Dorsolateral prefrontal cortex (tissue), 120 donors: ENCODE measurements at regions of chr4 and their contacts with region 1.

Region 1: GRCh38 chr4:67106861-67107460 is 438.3 kb downstream of the CENPC start:
- DNase-seq: no peak
- H3K4me3 ChIP-seq: no peak overlapping the region
- H3K27ac ChIP-seq: no peak overlapping the region
- H3K27me3 ChIP-seq: no peaks in the 10 kb centered on the region
- CTCF ChIP-seq: no peak

Region 2: GRCh38 chr4:67332627-67333026 is 225.7 kb after region 1 on chr4:
- intact Hi-C with region 1: loop called in 1 of 2 experiments (anchors 10 kb)
- DNase-seq: no peak
- H3K4me3 ChIP-seq: no peak overlapping the region
- H3K27ac ChIP-seq: no peak overlapping the region
- H3K27me3 ChIP-seq: peaks cover 0 to 10% (median 0%) of the 10 kb centered on the region in 45 donors
- CTCF ChIP-seq: peak in 29 of 56 donors; percentile 8 to 49 (median 27)